K562 (cell line): ENCODE measurements at regions of chr20 and their contacts with region 1.

Region 1: GRCh38 chr20:62010551-62011402 is 54.9 kb downstream of the TAF4 start:
- DNase-seq: peak; percentile 51 to 73 (median 62)
- ATAC-seq: peak; percentile 92
- H3K4me3 ChIP-seq: no peak overlapping the region
- H3K27ac ChIP-seq: no peak overlapping the region
- H3K4me1 ChIP-seq: peaks cover 0 to 19% of the 10 kb centered on the region in 2 experiments; a peak in 2 of 5 replicates
- H3K27me3 ChIP-seq: no peaks in the 10 kb centered on the region
- CTCF ChIP-seq: peak; percentile 70 to 87 (median 70)
- EP300 ChIP-seq: no peak
- POLR2A ChIP-seq: no peak
- RAD21 ChIP-seq: peak; percentile 81 to 85

Region 2: GRCh38 chr20:61993058-61993457 is 17.7 kb before region 1 on chr20:
- CTCF ChIA-PET with region 1: no interaction called
- POLR2A ChIA-PET with region 1: no interaction called
- in situ Hi-C with region 1: no loop called
- intact Hi-C with region 1: no loop called
- DNase-seq: no peak
- ATAC-seq: no peak
- H3K4me3 ChIP-seq: no peak overlapping the region
- H3K27ac ChIP-seq: no peak overlapping the region
- H3K4me1 ChIP-seq: no peaks in the 10 kb centered on the region
- H3K27me3 ChIP-seq: no peaks in the 10 kb centered on the region
- CTCF ChIP-seq: no peak
- EP300 ChIP-seq: no peak
- POLR2A ChIP-seq: no peak
- RAD21 ChIP-seq: no peak

Region 3: GRCh38 chr20:62136283-62137091 is 125.7 kb after region 1 on chr20:
- CTCF ChIA-PET with region 1: interaction called, 13 read pairs
- POLR2A ChIA-PET with region 1: interaction called, 6 read pairs
- in situ Hi-C with region 1: no loop called
- intact Hi-C with region 1: loop called (anchors 5 kb)
- DNase-seq: peak in 2 of 4 experiments; percentile 50 to 74
- ATAC-seq: peak; percentile 78
- H3K4me3 ChIP-seq: no peak overlapping the region
- H3K27ac ChIP-seq: no peak overlapping the region
- H3K4me1 ChIP-seq: peaks cover 5 to 6% of the 10 kb centered on the region in 2 experiments; a peak in 4 of 5 replicates
- H3K27me3 ChIP-seq: no peaks in the 10 kb centered on the region
- CTCF ChIP-seq: peak; percentile 74 to 85 (median 85)
- EP300 ChIP-seq: no peak
- POLR2A ChIP-seq: peak; percentile 62; the same call in 1 of the 2 replicates
- RAD21 ChIP-seq: peak; percentile 61 to 74

Region 4: DNA sequence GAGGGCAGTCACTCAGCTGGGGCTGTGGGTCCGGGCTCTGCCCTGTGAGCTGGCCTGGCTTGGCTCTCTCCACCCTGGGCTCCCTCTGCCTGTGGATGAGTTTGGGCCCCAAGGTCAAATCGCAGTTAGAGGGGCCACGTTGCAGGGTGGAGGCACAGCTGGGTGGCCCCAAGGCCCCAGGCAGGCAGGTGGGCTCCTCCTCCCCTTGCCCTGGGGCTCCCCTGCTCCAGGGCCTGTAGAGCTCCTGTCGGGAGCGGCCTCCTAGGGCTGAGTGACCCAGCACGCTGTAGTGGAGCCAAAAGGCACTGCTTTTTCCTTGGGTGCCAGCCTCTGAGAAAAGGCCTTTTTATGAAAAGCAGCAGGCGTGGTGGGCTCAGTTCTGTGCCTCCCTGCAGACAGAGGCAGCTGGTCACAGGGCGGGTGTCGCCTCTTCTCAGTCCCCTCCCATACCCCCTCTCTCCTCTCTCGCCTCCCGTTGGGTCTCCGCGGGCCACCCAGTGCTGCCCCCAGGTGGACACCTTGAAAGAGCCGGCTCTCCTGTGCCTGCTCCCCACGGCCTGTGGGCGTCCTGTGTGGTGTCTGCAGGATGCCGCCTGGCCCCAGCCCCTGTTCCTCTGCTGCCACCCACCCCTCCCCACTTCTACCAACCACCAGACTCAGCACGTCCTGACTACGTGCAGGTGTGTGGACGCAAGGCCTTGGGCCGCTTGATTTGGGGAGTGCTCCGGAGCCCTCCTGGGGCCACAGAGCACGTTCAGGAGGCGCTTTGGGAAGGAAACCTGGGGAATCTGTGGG is 146.0 kb after region 1 on chr20:
- CTCF ChIA-PET with region 1: interaction called, 12 read pairs
- POLR2A ChIA-PET with region 1: interaction called, 4 read pairs
- in situ Hi-C with region 1: no loop called
- intact Hi-C with region 1: loop called (anchors 5 kb)
- DNase-seq: peak; percentile 75 to 84 (median 80)
- ATAC-seq: peak; percentile 99
- H3K4me3 ChIP-seq: no peak overlapping the region
- H3K27ac ChIP-seq: peak overlapping the region; percentile 24; the same call in 1 of the 3 replicates
- H3K4me1 ChIP-seq: peaks cover 2 to 44% of the 10 kb centered on the region in 2 experiments; a peak in 3 of 5 replicates
- H3K27me3 ChIP-seq: no peaks in the 10 kb centered on the region
- CTCF ChIP-seq: peak; percentile 78 to 95 (median 83)
- EP300 ChIP-seq: no peak
- POLR2A ChIP-seq: no peak
- RAD21 ChIP-seq: peak in 1 of 2 experiments; percentile 67; a peak in 2 of 4 replicates